Right cardiac atrium (tissue), 5 donors: ENCODE measurements at regions of chr20 and their contacts with region 1.

Region 1: DNA sequence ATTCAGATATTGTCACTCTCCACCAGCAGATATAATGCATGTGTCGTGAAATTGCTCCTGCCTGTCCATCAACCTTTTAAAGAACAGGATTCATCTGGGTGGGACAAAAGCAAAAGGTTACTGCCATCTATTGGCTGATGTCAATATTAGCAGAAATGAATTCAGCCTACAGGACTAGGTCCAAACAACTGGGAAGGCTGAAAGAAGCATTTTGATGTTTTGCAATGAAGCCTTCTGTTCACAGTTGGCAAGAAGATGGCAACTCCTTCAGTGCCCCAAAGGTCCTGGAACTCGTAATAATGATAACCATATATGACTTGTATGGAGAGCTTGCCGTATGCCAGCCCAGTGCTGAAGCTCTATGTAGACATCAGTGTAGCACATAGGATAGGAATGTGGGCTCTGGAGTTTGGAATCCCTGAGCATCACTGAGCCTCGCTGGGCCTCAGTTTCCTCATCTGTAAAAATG is 7.5 kb downstream of the BCAS1 start:
- DNase-seq: no peak
- ATAC-seq: peak; percentile 44 to 80
- H3K4me3 ChIP-seq: no peak overlapping the region
- H3K27ac ChIP-seq: no peak overlapping the region
- H3K4me1 ChIP-seq: no peaks in the 10 kb centered on the region
- H3K27me3 ChIP-seq: no peaks in the 10 kb centered on the region

Region 2: DNA sequence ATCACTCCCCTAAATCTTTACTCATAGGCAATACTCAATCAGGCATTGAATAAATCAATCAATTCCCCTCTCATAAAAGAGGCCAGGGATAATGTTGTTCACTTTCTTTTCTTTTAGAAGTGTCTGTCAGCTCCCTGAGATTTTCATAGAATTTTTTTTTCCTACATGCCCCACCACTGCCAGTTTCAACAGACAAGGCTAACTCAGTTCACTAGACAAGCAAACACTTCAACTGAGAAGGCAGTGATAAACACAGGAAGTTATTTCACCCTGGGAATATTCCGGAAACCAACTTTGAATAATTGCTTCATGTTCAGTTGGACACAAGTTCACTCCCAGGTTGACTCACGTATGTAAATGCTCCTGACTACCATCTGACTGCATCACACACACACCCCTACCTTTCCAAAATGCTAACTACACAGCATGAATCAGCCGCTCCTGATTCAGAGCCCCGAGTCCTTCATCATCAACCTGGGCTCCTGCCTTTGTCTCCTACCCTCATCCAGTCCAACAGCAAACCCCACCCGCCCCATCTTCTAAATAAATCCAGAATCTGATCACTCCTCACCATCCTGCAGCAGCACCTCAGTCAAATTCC is 136.3 kb before region 1 on chr20:
- intact Hi-C with region 1: no loop called
- DNase-seq: no peak
- ATAC-seq: peak; percentile 67 to 87
- H3K4me3 ChIP-seq: no peak overlapping the region
- H3K27ac ChIP-seq: peak overlapping the region; percentile 26
- H3K4me1 ChIP-seq: peaks cover 5% of the 10 kb centered on the region
- H3K27me3 ChIP-seq: no peaks in the 10 kb centered on the region

Region 3: GRCh38 chr20:53939572-53940359 is 123.1 kb before region 1 on chr20:
- intact Hi-C with region 1: loop called in 2 of 4 experiments (anchors 10 kb)
- DNase-seq: peak; percentile 93 to 97 (median 95)
- ATAC-seq: peak; percentile 89 to 90
- H3K4me3 ChIP-seq: no peak overlapping the region
- H3K27ac ChIP-seq: peak overlapping the region; percentile 56
- H3K4me1 ChIP-seq: peaks cover 5% of the 10 kb centered on the region
- H3K27me3 ChIP-seq: no peaks in the 10 kb centered on the region

Region 4: GRCh38 chr20:53957451-53958172 is 105.2 kb before region 1 on chr20:
- intact Hi-C with region 1: loop called in 1 of 4 experiments (anchors 10 kb)
- DNase-seq: no peak
- ATAC-seq: peak; percentile 50 to 63
- H3K4me3 ChIP-seq: no peak overlapping the region
- H3K27ac ChIP-seq: no peak overlapping the region
- H3K4me1 ChIP-seq: peaks cover 6% of the 10 kb centered on the region
- H3K27me3 ChIP-seq: no peaks in the 10 kb centered on the region